Activated CD4-positive, alpha-beta memory T cell treated with anti-CD3 and anti-CD28 coated beads for 36 hours (primary cell): ENCODE measurements at regions of chr9 and their contacts with region 1.

Region 1: DNA sequence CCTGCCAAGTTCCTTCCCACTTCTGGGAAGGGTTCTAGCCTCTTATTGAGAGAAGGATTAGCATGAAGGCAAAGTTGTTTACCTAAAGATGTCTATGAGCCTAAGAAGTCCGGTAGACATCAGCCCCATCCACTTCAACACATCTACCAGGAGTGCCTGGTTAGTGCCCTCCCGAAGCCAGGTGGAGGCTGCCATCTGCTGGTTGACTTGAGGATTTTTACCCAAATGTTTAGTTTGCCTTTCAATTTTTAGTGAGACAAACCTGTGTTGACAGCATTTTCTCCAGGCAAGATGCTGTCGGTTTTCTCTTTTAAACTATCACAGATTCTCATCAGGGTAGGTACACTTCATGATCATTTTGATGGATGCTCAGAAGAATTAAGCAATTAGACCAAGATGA is 83.6 kb upstream of the TNFSF8 start:
- DNase-seq: peak; percentile 88
- H3K4me3 Mint-ChIP-seq: no peak overlapping the region
- H3K27ac Mint-ChIP-seq: peak overlapping the region; percentile 34
- H3K4me1 Mint-ChIP-seq: peaks cover 47% of the 10 kb centered on the region
- H3K27me3 Mint-ChIP-seq: peaks cover 2% of the 10 kb centered on the region

Region 2: GRCh38 chr9:114662081-114662989 is 351.7 kb before region 1 on chr9:
- CTCF ChIA-PET with region 1: interaction called, 27 read pairs
- POLR2A ChIA-PET with region 1: no interaction called
- intact Hi-C with region 1: no loop called
- DNase-seq: peak; percentile 74
- H3K4me3 Mint-ChIP-seq: no peak overlapping the region
- H3K27ac Mint-ChIP-seq: no peak overlapping the region
- H3K4me1 Mint-ChIP-seq: peaks cover 10% of the 10 kb centered on the region
- H3K27me3 Mint-ChIP-seq: peaks cover 7% of the 10 kb centered on the region

Region 3: DNA sequence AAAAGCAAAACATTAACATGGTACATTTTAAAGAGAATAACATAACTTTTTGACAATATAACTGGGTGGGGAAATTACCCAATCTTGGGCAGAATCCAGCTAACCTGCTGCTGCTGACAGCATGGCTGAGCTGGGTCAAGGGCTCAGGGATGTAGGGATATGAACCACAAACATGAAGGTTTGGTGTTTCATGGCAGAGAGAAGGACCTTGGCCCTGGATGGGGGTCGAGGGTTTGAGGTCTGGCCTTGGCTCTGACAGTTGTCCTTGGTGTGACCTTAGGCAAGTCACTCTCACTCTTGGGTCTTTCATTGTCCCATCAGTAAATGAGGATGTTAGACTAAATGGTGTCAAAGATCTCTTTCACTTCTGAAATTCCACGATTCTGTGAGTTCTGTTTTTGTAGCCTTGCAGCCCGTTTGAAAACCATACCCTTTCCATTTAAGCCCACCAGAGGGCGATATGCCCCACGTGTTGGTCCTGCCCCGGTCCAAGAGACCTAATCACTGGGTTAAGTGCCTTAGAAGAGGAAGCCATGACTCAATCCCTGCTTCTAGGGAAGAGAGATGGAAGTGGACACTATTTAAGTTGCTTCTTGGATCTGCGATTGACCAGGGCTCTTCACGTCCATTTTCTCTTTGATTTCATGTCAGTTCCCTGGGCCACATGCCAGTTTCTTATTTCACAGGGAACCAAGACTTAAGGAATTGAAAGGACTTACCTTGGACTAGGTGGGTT is 275.2 kb before region 1 on chr9:
- CTCF ChIA-PET with region 1: interaction called, 59 read pairs
- POLR2A ChIA-PET with region 1: no interaction called
- intact Hi-C with region 1: loop called (anchors 1 kb)
- DNase-seq: peak; percentile 81
- H3K4me3 Mint-ChIP-seq: no peak overlapping the region
- H3K27ac Mint-ChIP-seq: peak overlapping the region; percentile 81
- H3K4me1 Mint-ChIP-seq: peaks cover 52% of the 10 kb centered on the region
- H3K27me3 Mint-ChIP-seq: no peaks in the 10 kb centered on the region

Region 4: DNA sequence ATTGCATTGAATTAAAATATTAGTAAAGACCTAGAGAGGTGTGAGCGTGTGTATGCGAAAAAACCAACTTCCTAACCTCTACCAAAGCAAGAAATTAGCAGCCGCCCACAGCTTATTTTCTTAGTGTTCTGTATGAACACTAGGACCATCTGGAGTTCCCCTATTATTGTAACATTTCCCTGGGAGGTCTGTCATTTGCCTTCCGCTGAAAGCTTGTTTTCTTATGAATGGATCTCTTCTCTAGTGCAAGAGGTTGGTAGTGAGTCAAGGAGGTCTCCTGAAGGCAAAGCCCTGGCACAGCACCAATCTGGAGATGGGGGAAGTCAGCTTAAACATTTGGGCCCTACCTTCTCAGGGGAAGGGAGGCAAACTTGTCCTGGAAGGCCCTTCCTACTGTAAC is 94.4 kb before region 1 on chr9:
- CTCF ChIA-PET with region 1: interaction called, 21 read pairs
- POLR2A ChIA-PET with region 1: interaction called, 24 read pairs
- intact Hi-C with region 1: no loop called
- DNase-seq: peak; percentile 68
- H3K4me3 Mint-ChIP-seq: peak overlapping the region; percentile 10
- H3K27ac Mint-ChIP-seq: peak overlapping the region; percentile 76
- H3K4me1 Mint-ChIP-seq: peaks cover 93% of the 10 kb centered on the region
- H3K27me3 Mint-ChIP-seq: no peaks in the 10 kb centered on the region

Region 5: DNA sequence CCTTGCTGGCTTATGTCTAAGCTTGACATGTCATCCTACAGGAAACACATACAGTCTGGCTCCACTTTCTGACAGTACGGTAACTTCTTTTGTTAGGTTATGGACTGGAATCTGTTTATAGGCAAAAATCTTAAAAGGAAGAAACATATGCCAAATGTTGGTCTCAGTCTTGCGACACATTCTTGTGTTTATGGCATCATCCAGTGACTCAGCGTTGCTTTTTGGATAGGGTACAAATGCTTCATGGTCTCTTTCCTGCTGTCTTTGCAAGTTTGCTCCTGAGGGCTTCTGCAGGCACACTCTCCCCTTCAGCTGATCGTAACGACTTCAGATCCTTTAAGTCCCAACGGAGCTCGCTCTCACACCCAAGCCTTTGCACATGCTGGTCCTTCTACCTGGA is 60.1 kb before region 1 on chr9:
- CTCF ChIA-PET with region 1: interaction called, 5 read pairs
- POLR2A ChIA-PET with region 1: no interaction called
- intact Hi-C with region 1: loop called (anchors 2 kb)
- DNase-seq: peak; percentile 48
- H3K4me3 Mint-ChIP-seq: no peak overlapping the region
- H3K27ac Mint-ChIP-seq: no peak overlapping the region
- H3K4me1 Mint-ChIP-seq: peaks cover 35% of the 10 kb centered on the region
- H3K27me3 Mint-ChIP-seq: no peaks in the 10 kb centered on the region